ENCODE measurements at regions of chr10 and their contacts with region 1.

Region 1: DNA sequence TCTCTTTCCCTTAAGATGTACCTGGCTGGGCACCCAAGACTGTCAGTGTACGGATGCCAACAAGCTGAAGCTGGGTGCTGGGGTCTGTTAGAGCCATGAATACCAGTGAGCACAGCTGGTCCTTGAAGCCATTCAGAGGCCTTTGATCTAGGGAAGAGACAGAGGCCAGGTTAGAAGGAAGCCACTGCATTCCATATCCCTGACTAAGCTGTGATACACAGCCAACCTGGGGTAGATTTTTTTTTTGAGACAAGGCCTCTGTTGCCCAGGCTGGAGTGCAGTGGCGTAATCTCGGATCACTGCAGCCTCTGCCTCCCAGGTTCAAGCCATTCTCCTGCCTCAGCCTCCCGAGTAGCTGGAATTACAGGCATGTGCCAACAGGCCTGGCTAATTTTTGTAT is 20.8 kb downstream of the ZDHHC16 start:
- DNase-seq: no peak
- ATAC-seq: no peak
- H3K4me3 ChIP-seq: no peak overlapping the region
- H3K27ac ChIP-seq: no peak overlapping the region
- H3K4me1 ChIP-seq: peaks cover 8% of the 10 kb centered on the region
- H3K27me3 ChIP-seq: no peaks in the 10 kb centered on the region
- CTCF ChIP-seq: no peak
- POLR2A ChIP-seq: no peak

Region 2: GRCh38 chr10:97553575-97554031 is 86.8 kb after region 1 on chr10:
- intact Hi-C with region 1: loop called (anchors 5 kb)
- DNase-seq: peak; percentile 65 to 75 (median 68)
- ATAC-seq: peak; percentile 87
- H3K4me3 ChIP-seq: no peak overlapping the region
- H3K27ac ChIP-seq: no peak overlapping the region
- H3K4me1 ChIP-seq: peaks cover 5% of the 10 kb centered on the region
- H3K27me3 ChIP-seq: no peaks in the 10 kb centered on the region
- CTCF ChIP-seq: peak; percentile 37 to 79 (median 71)
- POLR2A ChIP-seq: no peak

Measured in body of pancreas (tissue), 4 donors.